Activated CD4-positive, alpha-beta memory T cell treated with anti-CD3 and anti-CD28 coated beads, Interleukin-2, amount 10 ng/mL, durations not matched to agents 7 days and 5 days (primary cell): ENCODE measurements at regions of chr9 and their contacts with region 1.

Region 1: GRCh38 chr9:132240753-132241493 is 79.1 kb downstream of the NTNG2 start:
- DNase-seq: peak; percentile 99
- H3K4me3 Mint-ChIP-seq: peak overlapping the region; percentile 90
- H3K27ac Mint-ChIP-seq: peak overlapping the region; percentile 66
- H3K4me1 Mint-ChIP-seq: peaks cover 9% of the 10 kb centered on the region
- H3K27me3 Mint-ChIP-seq: peaks cover 31% of the 10 kb centered on the region

Region 2: DNA sequence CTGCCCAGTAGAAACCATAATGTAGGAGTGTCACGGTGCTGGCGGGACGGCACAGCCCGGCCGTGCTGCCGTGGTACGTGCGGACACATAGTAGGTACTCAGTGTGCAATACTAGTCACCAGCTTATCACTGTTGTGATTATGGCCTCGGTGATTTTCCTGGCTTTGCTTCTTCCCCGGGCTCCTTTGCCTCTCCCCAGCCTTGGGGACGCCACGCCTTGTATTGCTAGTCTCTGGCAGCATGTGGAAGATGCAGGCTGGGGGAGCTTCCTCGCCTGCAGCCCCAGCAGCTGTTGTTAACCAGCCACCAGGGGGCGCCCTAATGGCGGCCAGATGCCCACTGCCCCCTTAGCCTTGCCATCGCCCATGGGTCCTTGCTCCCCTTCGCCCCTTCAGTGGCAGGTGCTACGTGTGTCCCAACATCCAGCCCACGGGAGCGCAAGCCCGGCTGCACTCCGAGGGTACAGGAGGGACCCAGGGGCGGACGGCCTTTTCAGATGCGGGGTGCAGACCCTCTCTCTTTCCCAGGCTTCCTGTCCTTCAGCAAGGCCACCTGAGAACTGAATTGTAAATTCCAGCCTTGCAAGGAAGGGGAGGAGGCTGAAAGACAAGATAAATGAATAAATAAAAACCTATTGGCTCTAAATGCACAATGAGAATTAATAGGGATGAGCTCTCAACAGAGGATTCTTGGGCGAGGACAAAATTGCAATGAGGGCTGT is 71.1 kb before region 1 on chr9:
- CTCF ChIA-PET with region 1: interaction called, 69 read pairs
- POLR2A ChIA-PET with region 1: interaction called, 4 read pairs
- DNase-seq: peak; percentile 55
- H3K4me3 Mint-ChIP-seq: no peak overlapping the region
- H3K27ac Mint-ChIP-seq: no peak overlapping the region
- H3K4me1 Mint-ChIP-seq: peaks cover 4% of the 10 kb centered on the region
- H3K27me3 Mint-ChIP-seq: peaks cover 35% of the 10 kb centered on the region

Region 3: GRCh38 chr9:132260846-132261245 is 19.9 kb after region 1 on chr9:
- CTCF ChIA-PET with region 1: interaction called, 12 read pairs
- POLR2A ChIA-PET with region 1: interaction called, 3 read pairs
- DNase-seq: no peak
- H3K4me3 Mint-ChIP-seq: no peak overlapping the region
- H3K27ac Mint-ChIP-seq: peak overlapping the region; percentile 5
- H3K4me1 Mint-ChIP-seq: peaks cover 6% of the 10 kb centered on the region
- H3K27me3 Mint-ChIP-seq: no peaks in the 10 kb centered on the region

Region 4: DNA sequence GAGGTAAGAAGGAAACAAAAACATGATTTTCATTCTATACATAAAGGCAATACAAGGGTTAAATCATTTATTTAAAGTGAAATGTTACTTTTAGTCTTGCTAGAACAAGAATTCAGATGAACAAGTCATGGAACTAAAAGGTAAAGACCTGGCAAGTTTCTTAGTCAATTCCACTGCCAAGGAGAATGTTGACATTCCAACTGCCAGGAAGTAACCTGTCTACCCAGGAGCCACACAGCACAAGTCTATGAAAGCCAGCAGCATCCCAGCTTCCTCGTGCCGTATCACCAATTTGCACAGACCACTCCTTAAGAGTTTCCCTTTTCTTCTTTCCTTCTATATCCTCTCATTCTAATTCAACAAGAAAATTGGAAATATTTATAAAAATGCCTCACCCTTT is 33.9 kb after region 1 on chr9:
- CTCF ChIA-PET with region 1: no interaction called
- POLR2A ChIA-PET with region 1: no interaction called
- DNase-seq: no peak
- H3K4me3 Mint-ChIP-seq: no peak overlapping the region
- H3K27ac Mint-ChIP-seq: no peak overlapping the region
- H3K4me1 Mint-ChIP-seq: no peaks in the 10 kb centered on the region
- H3K27me3 Mint-ChIP-seq: no peaks in the 10 kb centered on the region

Region 5: GRCh38 chr9:132288361-132288760 is 47.4 kb after region 1 on chr9:
- CTCF ChIA-PET with region 1: no interaction called
- POLR2A ChIA-PET with region 1: no interaction called
- DNase-seq: no peak
- H3K4me3 Mint-ChIP-seq: no peak overlapping the region
- H3K27ac Mint-ChIP-seq: peak overlapping the region; percentile 34
- H3K4me1 Mint-ChIP-seq: peaks cover 18% of the 10 kb centered on the region
- H3K27me3 Mint-ChIP-seq: no peaks in the 10 kb centered on the region

Region 6: GRCh38 chr9:132411091-132411508 is 170.2 kb after region 1 on chr9:
- CTCF ChIA-PET with region 1: no interaction called
- POLR2A ChIA-PET with region 1: no interaction called
- DNase-seq: peak; percentile 78
- H3K4me3 Mint-ChIP-seq: peak overlapping the region; percentile 44
- H3K27ac Mint-ChIP-seq: no peak overlapping the region
- H3K4me1 Mint-ChIP-seq: peaks cover 32% of the 10 kb centered on the region
- H3K27me3 Mint-ChIP-seq: peaks cover 60% of the 10 kb centered on the region

Region 7: GRCh38 chr9:132768932-132769905 is 528.3 kb after region 1 on chr9:
- CTCF ChIA-PET with region 1: no interaction called
- POLR2A ChIA-PET with region 1: no interaction called
- DNase-seq: peak; percentile 71
- H3K4me3 Mint-ChIP-seq: peak overlapping the region; percentile 97
- H3K27ac Mint-ChIP-seq: peak overlapping the region; percentile 93
- H3K4me1 Mint-ChIP-seq: peaks cover 22% of the 10 kb centered on the region
- H3K27me3 Mint-ChIP-seq: peaks cover 9% of the 10 kb centered on the region